ENCODE measurements at regions of chr1 and their contacts with region 1.

Region 1: DNA sequence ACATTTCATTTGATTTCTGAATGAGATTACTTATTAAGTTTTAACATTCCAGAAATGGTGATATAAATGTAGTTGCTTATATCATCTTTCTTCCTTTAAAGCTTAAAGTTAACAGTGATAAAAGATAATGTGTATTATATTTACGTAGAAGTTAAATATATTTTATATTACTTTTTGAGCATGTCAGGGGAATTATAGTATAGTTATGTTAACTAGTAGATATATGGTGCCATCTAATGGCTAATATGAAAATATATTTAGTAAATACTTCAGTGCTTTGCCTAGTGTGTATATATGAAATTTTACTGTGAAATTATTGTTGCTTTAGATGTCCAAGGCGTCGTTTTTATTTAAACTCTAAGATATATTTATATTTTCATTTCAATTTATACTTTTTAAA is 51.5 kb downstream of the SYT14 start:
- DNase-seq: peak in 1 of 14 experiments; percentile 6
- ATAC-seq: no peak
- H3K4me3 ChIP-seq: no peak overlapping the region
- H3K4me3 Mint-ChIP-seq: no peak overlapping the region
- H3K27ac ChIP-seq: no peak overlapping the region
- H3K27ac Mint-ChIP-seq: no peak overlapping the region
- H3K4me1 ChIP-seq: no peaks in the 10 kb centered on the region
- H3K4me1 Mint-ChIP-seq: no peaks in the 10 kb centered on the region
- H3K27me3 ChIP-seq: peaks cover 8 to 9% of the 10 kb centered on the region in 2 experiments
- H3K27me3 Mint-ChIP-seq: peaks cover 45% of the 10 kb centered on the region
- CTCF ChIP-seq: peak; percentile 21

Region 2: DNA sequence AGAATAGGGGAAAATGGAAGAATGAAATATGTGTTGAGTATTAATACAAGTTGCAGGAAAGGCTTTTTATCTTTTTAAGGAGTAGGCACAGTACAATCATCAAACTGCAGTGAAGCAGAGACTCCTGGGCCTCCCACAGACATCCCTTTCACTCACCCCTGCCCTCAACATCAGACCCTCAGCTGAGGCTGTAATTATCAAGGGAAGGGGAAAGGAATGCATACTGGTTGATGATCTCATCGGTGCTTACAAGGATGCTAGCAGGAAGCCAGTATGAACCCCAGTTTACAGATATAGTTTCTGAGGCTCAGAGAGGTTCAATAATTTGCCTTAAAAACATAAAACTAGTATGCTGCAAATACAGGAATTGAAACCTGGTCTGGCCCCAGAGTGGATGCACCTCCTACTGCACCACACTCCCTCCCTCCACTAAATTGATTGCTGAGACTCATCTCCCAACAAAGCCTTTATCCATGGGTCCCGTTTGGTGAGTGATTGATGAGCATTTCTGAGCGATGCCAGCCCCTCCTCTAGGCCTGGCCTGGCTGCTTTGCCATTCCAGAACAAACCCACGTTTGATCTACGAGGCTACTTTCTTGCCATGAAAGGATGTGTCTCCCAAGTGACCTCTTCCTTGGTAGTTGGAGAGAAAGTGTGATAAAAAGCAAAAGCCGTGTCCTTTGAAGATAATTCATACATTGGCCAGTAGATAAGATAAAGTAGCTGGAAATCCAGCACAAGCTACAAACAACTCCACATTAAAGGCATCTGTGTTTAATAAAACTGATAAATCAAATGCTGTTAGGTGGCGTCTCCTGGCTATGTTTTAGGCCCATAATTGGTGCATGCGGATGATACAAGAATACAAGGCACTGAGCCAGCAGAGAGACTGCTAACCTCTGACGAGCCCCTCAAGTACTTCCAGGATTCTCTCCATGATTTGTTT is 639.9 kb before region 1 on chr1:
- CTCF ChIA-PET with region 1: no interaction called
- POLR2A ChIA-PET with region 1: no interaction called
- intact Hi-C with region 1: no loop called
- DNase-seq: no peak
- ATAC-seq: no peak
- H3K4me3 ChIP-seq: no peak overlapping the region
- H3K4me3 Mint-ChIP-seq: no peak overlapping the region
- H3K27ac ChIP-seq: no peak overlapping the region
- H3K27ac Mint-ChIP-seq: no peak overlapping the region
- H3K4me1 ChIP-seq: no peaks in the 10 kb centered on the region
- H3K4me1 Mint-ChIP-seq: no peaks in the 10 kb centered on the region
- H3K27me3 ChIP-seq: peaks cover 0 to 2% of the 10 kb centered on the region in 2 experiments
- H3K27me3 Mint-ChIP-seq: peaks cover 13% of the 10 kb centered on the region
- CTCF ChIP-seq: no peak

Region 3: GRCh38 chr1:209576798-209577197 is 412.7 kb before region 1 on chr1:
- CTCF ChIA-PET with region 1: no interaction called
- POLR2A ChIA-PET with region 1: no interaction called
- intact Hi-C with region 1: loop called in 1 of 2 experiments (anchors 10 kb)
- DNase-seq: peak; percentile 34 to 77 (median 54)
- ATAC-seq: peak; percentile 74
- H3K4me3 ChIP-seq: no peak overlapping the region
- H3K4me3 Mint-ChIP-seq: no peak overlapping the region
- H3K27ac ChIP-seq: no peak overlapping the region
- H3K27ac Mint-ChIP-seq: no peak overlapping the region
- H3K4me1 ChIP-seq: no peaks in the 10 kb centered on the region
- H3K4me1 Mint-ChIP-seq: no peaks in the 10 kb centered on the region
- H3K27me3 ChIP-seq: peaks cover 4 to 10% of the 10 kb centered on the region in 2 experiments
- H3K27me3 Mint-ChIP-seq: no peaks in the 10 kb centered on the region
- CTCF ChIP-seq: peak; percentile 94

Region 4: GRCh38 chr1:209860293-209860881 is 129.1 kb before region 1 on chr1:
- CTCF ChIA-PET with region 1: no interaction called
- POLR2A ChIA-PET with region 1: no interaction called
- intact Hi-C with region 1: loop called (anchors 1 kb)
- DNase-seq: peak; percentile 50 to 86 (median 60)
- ATAC-seq: peak; percentile 81
- H3K4me3 ChIP-seq: no peak overlapping the region
- H3K4me3 Mint-ChIP-seq: no peak overlapping the region
- H3K27ac ChIP-seq: no peak overlapping the region
- H3K27ac Mint-ChIP-seq: no peak overlapping the region
- H3K4me1 ChIP-seq: no peaks in the 10 kb centered on the region
- H3K4me1 Mint-ChIP-seq: no peaks in the 10 kb centered on the region
- H3K27me3 ChIP-seq: peaks cover 4 to 7% of the 10 kb centered on the region in 2 experiments
- H3K27me3 Mint-ChIP-seq: peaks cover 27% of the 10 kb centered on the region
- CTCF ChIP-seq: peak; percentile 97

Region 5: GRCh38 chr1:210280221-210280620 is 290.7 kb after region 1 on chr1:
- CTCF ChIA-PET with region 1: no interaction called
- POLR2A ChIA-PET with region 1: no interaction called
- intact Hi-C with region 1: no loop called
- DNase-seq: no peak
- ATAC-seq: no peak
- H3K4me3 ChIP-seq: no peak overlapping the region
- H3K4me3 Mint-ChIP-seq: no peak overlapping the region
- H3K27ac ChIP-seq: no peak overlapping the region
- H3K27ac Mint-ChIP-seq: no peak overlapping the region
- H3K4me1 ChIP-seq: no peaks in the 10 kb centered on the region
- H3K4me1 Mint-ChIP-seq: no peaks in the 10 kb centered on the region
- H3K27me3 ChIP-seq: peaks cover 0 to 13% of the 10 kb centered on the region in 2 experiments
- H3K27me3 Mint-ChIP-seq: peaks cover 44% of the 10 kb centered on the region
- CTCF ChIP-seq: no peak

Region 6: DNA sequence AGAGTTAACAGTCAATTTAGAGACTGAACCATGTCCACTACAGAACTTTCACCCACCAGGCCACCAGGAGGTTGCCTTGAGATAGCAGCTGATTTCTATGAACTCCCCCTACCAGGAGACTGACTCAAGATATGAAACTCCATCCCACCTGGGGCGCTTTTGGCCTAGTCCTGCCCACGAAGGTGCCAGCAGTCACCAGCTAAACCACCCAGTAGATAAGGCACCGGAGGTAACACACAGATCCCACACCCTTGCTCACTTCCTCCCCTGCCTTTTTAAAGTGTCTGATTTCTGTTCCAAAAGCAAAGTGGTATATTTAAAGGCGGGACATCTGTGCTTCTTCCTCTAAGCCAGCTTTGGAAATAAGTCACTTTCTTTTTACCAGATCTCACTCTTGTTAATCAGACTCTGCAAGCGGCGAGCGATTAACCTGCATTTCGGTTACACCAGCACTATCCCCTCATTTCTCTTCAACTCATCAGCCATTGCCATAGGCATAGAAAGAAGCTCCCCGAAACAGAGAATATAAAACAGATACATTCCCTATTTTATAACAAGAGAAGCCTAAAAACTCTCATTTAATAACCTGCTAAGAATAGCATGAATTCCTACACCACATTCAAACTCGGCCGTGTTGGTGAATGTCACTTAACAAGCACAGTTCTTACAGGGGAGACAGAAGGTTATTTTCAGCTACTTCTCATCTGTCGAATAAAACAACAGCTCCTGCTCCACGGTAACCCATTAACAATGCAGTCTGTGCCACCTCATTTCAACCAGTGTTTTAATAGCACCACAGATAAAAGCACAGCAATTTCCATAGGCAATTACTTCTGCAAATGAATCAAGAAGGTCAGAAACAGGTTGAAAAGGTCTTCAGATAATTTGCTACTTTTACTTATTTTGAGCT is 826.4 kb after region 1 on chr1:
- CTCF ChIA-PET with region 1: no interaction called
- POLR2A ChIA-PET with region 1: no interaction called
- intact Hi-C with region 1: no loop called
- DNase-seq: no peak
- ATAC-seq: no peak
- H3K4me3 ChIP-seq: no peak overlapping the region
- H3K4me3 Mint-ChIP-seq: no peak overlapping the region
- H3K27ac ChIP-seq: no peak overlapping the region
- H3K27ac Mint-ChIP-seq: no peak overlapping the region
- H3K4me1 ChIP-seq: no peaks in the 10 kb centered on the region
- H3K4me1 Mint-ChIP-seq: no peaks in the 10 kb centered on the region
- H3K27me3 ChIP-seq: no peaks in the 10 kb centered on the region
- H3K27me3 Mint-ChIP-seq: peaks cover 13% of the 10 kb centered on the region
- CTCF ChIP-seq: no peak